B cell (primary cell): ENCODE measurements at regions of chr17 and their contacts with region 1.

Region 1: GRCh38 chr17:2592971-2593820 is at the start of gene PAFAH1B1:
- DNase-seq: peak; percentile 98
- ATAC-seq: peak; percentile 75
- H3K4me3 ChIP-seq: peak within 1 kb of the TSS; percentile 83 to 98 (median 93)
- H3K4me3 Mint-ChIP-seq: peak within 1 kb of the TSS; percentile 95
- H3K27ac ChIP-seq: peak within 1 kb of the TSS; percentile 94 to 97
- H3K27ac Mint-ChIP-seq: peak within 1 kb of the TSS; percentile 97
- H3K4me1 ChIP-seq: peaks cover 30 to 34% of the 10 kb centered on the region in 2 donors
- H3K4me1 Mint-ChIP-seq: peaks cover 33% of the 10 kb centered on the region
- H3K27me3 ChIP-seq: no peaks in the 10 kb centered on the region
- H3K27me3 Mint-ChIP-seq: no peaks in the 10 kb centered on the region
- CTCF ChIP-seq: peak; percentile 31
- total RNA-seq, gene PAFAH1B1: 170 and 172 TPM in 2 replicates

Region 2: GRCh38 chr17:1374431-1375177 is 1218.6 kb before region 1 on chr17:
- CTCF ChIA-PET with region 1: no interaction called
- POLR2A ChIA-PET with region 1: interaction called, 10 read pairs
- intact Hi-C with region 1: no loop called
- DNase-seq: peak; percentile 44
- ATAC-seq: peak; percentile 49
- H3K4me3 ChIP-seq: no peak overlapping the region
- H3K4me3 Mint-ChIP-seq: peak overlapping the region; percentile 47
- H3K27ac ChIP-seq: no peak overlapping the region
- H3K27ac Mint-ChIP-seq: peak overlapping the region; percentile 77
- H3K4me1 ChIP-seq: peaks cover 50 to 52% of the 10 kb centered on the region in 2 donors
- H3K4me1 Mint-ChIP-seq: peaks cover 75% of the 10 kb centered on the region
- H3K27me3 ChIP-seq: no peaks in the 10 kb centered on the region
- H3K27me3 Mint-ChIP-seq: no peaks in the 10 kb centered on the region
- CTCF ChIP-seq: no peak

Region 3: GRCh38 chr17:2511462-2512369 is 81.5 kb before region 1 on chr17 and contains the start of gene METTL16:
- CTCF ChIA-PET with region 1: no interaction called
- POLR2A ChIA-PET with region 1: interaction called, 6 read pairs
- intact Hi-C with region 1: loop called (anchors 1 kb)
- DNase-seq: peak; percentile 96
- ATAC-seq: peak; percentile 99
- H3K4me3 ChIP-seq: peak within 1 kb of the TSS; percentile 76 to 96 (median 88)
- H3K4me3 Mint-ChIP-seq: no peak within 1 kb of the TSS
- H3K27ac ChIP-seq: peak within 1 kb of the TSS; percentile 91 to 92
- H3K27ac Mint-ChIP-seq: no peak within 1 kb of the TSS
- H3K4me1 ChIP-seq: peaks cover 19 to 20% of the 10 kb centered on the region in 2 donors
- H3K4me1 Mint-ChIP-seq: peaks cover 21% of the 10 kb centered on the region
- H3K27me3 ChIP-seq: no peaks in the 10 kb centered on the region
- H3K27me3 Mint-ChIP-seq: no peaks in the 10 kb centered on the region
- CTCF ChIP-seq: no peak
- total RNA-seq, gene METTL16: 52.9 and 56.5 TPM in 2 replicates

Region 4: GRCh38 chr17:2672026-2672425 is 78.8 kb after region 1 on chr17:
- CTCF ChIA-PET with region 1: interaction called, 8 read pairs
- POLR2A ChIA-PET with region 1: no interaction called
- intact Hi-C with region 1: loop called (anchors 1 kb)
- DNase-seq: no peak
- ATAC-seq: no peak
- H3K4me3 ChIP-seq: no peak overlapping the region
- H3K4me3 Mint-ChIP-seq: no peak overlapping the region
- H3K27ac ChIP-seq: peak overlapping the region in 1 of 2 donors; percentile 9
- H3K27ac Mint-ChIP-seq: no peak overlapping the region
- H3K4me1 ChIP-seq: no peaks in the 10 kb centered on the region
- H3K4me1 Mint-ChIP-seq: peaks cover 3% of the 10 kb centered on the region
- H3K27me3 ChIP-seq: no peaks in the 10 kb centered on the region
- H3K27me3 Mint-ChIP-seq: no peaks in the 10 kb centered on the region
- CTCF ChIP-seq: no peak

Region 5: DNA sequence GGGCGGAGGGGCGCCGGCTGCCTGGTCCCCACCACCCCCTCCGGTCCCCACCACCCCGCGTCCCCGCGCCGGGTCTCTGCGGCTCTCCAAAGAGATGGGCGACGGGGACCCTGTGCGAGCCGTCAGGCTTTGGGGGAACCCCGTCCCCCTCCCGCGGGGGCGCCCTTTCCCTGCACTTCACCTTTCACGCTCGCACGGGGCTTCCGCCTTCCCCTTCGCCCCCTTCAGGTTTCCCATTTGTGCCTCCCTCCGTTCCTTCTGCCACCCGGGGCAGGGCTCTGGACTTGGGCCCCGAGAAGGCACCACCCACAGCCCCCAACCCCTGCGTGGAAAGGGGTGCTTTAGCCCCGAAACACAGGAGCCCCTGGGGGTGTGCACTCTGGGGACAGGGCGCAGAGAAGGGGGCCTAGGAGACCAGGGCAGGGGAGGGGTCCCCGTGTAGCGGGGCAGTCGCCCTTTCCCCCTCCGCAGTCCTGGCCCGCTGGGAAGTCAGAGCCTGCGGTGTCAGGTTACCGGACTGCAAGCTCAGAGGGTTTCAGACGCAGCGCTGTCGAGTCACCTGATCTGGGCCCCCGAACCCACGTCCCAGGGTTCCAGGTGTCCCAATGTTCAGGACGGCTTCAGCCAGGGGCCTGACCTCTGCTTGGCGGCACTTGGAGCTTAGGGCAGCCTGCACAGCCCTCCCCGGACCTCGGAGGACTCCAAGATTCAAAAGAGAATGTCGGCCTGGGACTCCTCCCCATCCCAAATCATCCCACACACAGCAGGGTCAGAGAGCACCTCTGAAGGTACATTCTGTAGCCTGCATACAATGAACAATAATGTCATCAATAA is 162.9 kb after region 1 on chr17:
- CTCF ChIA-PET with region 1: no interaction called
- POLR2A ChIA-PET with region 1: no interaction called
- intact Hi-C with region 1: no loop called
- DNase-seq: no peak
- ATAC-seq: no peak
- H3K4me3 ChIP-seq: no peak overlapping the region
- H3K4me3 Mint-ChIP-seq: peak overlapping the region; percentile 59
- H3K27ac ChIP-seq: no peak overlapping the region
- H3K27ac Mint-ChIP-seq: no peak overlapping the region
- H3K4me1 ChIP-seq: peaks cover 8% of the 10 kb centered on the region in 2 donors
- H3K4me1 Mint-ChIP-seq: peaks cover 2% of the 10 kb centered on the region
- H3K27me3 ChIP-seq: peaks cover 0 to 43% (median 12%) of the 10 kb centered on the region in 4 experiments
- H3K27me3 Mint-ChIP-seq: peaks cover 36% of the 10 kb centered on the region
- CTCF ChIP-seq: no peak

Region 6: GRCh38 chr17:3668279-3669085 is 1075.3 kb after region 1 on chr17 and contains the starts of genes EMC6 and TAX1BP3:
- CTCF ChIA-PET with region 1: no interaction called
- POLR2A ChIA-PET with region 1: no interaction called
- intact Hi-C with region 1: loop called (anchors 5 kb)
- DNase-seq: peak; percentile 99
- ATAC-seq: peak; percentile 90
- H3K4me3 ChIP-seq: peak within 1 kb of the TSS; percentile 60 to 99 (median 98)
- H3K4me3 Mint-ChIP-seq: peak within 1 kb of the TSS; percentile 96
- H3K27ac ChIP-seq: peak within 1 kb of the TSS; percentile 74 to 86
- H3K27ac Mint-ChIP-seq: peak within 1 kb of the TSS; percentile 94
- H3K4me1 ChIP-seq: peaks cover 11 to 21% of the 10 kb centered on the region in 2 donors
- H3K4me1 Mint-ChIP-seq: peaks cover 33% of the 10 kb centered on the region
- H3K27me3 ChIP-seq: no peaks in the 10 kb centered on the region
- H3K27me3 Mint-ChIP-seq: no peaks in the 10 kb centered on the region
- CTCF ChIP-seq: no peak
- total RNA-seq, gene EMC6: 23.4 and 26.6 TPM in 2 replicates
- total RNA-seq, gene TAX1BP3: 17.1 and 17.7 TPM in 2 replicates